ENCODE measurements at regions of chr2 and their contacts with region 1.

Region 1: DNA sequence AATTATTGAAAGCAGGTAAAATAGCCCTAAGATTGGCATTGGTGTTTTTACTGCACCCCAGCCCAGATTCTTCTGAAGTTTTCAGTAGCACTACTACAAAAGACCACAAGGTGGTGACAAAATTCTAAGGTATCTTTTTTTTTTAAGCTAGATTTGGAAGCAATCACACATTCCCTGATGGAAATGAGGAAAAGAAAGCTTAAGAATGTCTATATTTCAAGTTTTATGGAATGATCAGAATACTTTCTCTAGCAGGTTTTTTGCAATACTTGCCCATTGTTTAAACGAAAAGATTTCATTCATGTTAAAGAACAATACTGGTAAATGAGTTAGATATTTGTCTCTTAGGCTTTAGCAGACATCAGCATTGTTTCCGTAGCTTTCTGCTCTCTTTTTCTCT is 32.1 kb upstream of the ZNF638 start:
- DNase-seq: no peak
- H3K4me3 Mint-ChIP-seq: no peak overlapping the region
- H3K27ac Mint-ChIP-seq: no peak overlapping the region
- H3K4me1 Mint-ChIP-seq: no peaks in the 10 kb centered on the region
- H3K27me3 Mint-ChIP-seq: peaks cover 6% of the 10 kb centered on the region

Region 2: GRCh38 chr2:71018625-71019024 is 280.9 kb before region 1 on chr2:
- CTCF ChIA-PET with region 1: no interaction called
- POLR2A ChIA-PET with region 1: no interaction called
- intact Hi-C with region 1: loop called (anchors 10 kb)
- DNase-seq: no peak
- H3K4me3 Mint-ChIP-seq: no peak overlapping the region
- H3K27ac Mint-ChIP-seq: no peak overlapping the region
- H3K4me1 Mint-ChIP-seq: peaks cover 7% of the 10 kb centered on the region
- H3K27me3 Mint-ChIP-seq: no peaks in the 10 kb centered on the region

Region 3: GRCh38 chr2:71157124-71157793 is 142.2 kb before region 1 on chr2:
- CTCF ChIA-PET with region 1: interaction called, 3 read pairs
- POLR2A ChIA-PET with region 1: no interaction called
- intact Hi-C with region 1: loop called (anchors 10 kb)
- DNase-seq: peak; percentile 66
- H3K4me3 Mint-ChIP-seq: no peak overlapping the region
- H3K27ac Mint-ChIP-seq: no peak overlapping the region
- H3K4me1 Mint-ChIP-seq: no peaks in the 10 kb centered on the region
- H3K27me3 Mint-ChIP-seq: peaks cover 5% of the 10 kb centered on the region

Region 4: DNA sequence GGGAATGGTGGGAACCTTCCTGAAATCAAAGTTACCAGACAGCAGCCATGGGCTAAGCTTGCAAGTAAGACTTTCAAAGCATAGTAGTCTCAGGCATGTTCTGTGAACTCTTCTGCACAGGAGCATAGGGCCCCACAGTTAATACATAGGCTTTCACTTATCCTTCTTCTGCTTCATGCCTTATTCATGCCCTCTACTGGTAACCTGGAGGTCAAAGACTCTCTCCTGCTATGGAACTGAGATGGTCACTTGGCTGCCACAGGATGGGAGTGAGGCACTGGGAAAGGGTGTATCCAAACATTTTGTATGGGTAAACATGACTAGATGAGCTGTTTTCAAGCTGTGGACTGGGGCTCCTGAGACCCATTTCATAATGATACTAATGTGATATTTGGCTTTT is 17.0 kb before region 1 on chr2:
- CTCF ChIA-PET with region 1: interaction called, 18 read pairs
- POLR2A ChIA-PET with region 1: no interaction called
- intact Hi-C with region 1: no loop called
- DNase-seq: no peak
- H3K4me3 Mint-ChIP-seq: no peak overlapping the region
- H3K27ac Mint-ChIP-seq: no peak overlapping the region
- H3K4me1 Mint-ChIP-seq: peaks cover 5% of the 10 kb centered on the region
- H3K27me3 Mint-ChIP-seq: peaks cover 54% of the 10 kb centered on the region

Region 5: GRCh38 chr2:71331581-71332434 is 32.3 kb after region 1 on chr2 and contains the start of gene ZNF638:
- CTCF ChIA-PET with region 1: interaction called, 30 read pairs
- POLR2A ChIA-PET with region 1: no interaction called
- intact Hi-C with region 1: no loop called
- DNase-seq: peak; percentile 94
- H3K4me3 Mint-ChIP-seq: peak within 1 kb of the TSS; percentile 94
- H3K27ac Mint-ChIP-seq: peak within 1 kb of the TSS; percentile 93
- H3K4me1 Mint-ChIP-seq: peaks cover 31% of the 10 kb centered on the region
- H3K27me3 Mint-ChIP-seq: peaks cover 2% of the 10 kb centered on the region
- total RNA-seq, gene ZNF638: 74.2 to 87.4 TPM

Region 6: GRCh38 chr2:71449343-71449742 is 149.8 kb after region 1 on chr2:
- CTCF ChIA-PET with region 1: no interaction called
- POLR2A ChIA-PET with region 1: no interaction called
- intact Hi-C with region 1: no loop called
- DNase-seq: no peak
- H3K4me3 Mint-ChIP-seq: no peak overlapping the region
- H3K27ac Mint-ChIP-seq: no peak overlapping the region
- H3K4me1 Mint-ChIP-seq: peaks cover 10% of the 10 kb centered on the region
- H3K27me3 Mint-ChIP-seq: peaks cover 12% of the 10 kb centered on the region

Region 7: DNA sequence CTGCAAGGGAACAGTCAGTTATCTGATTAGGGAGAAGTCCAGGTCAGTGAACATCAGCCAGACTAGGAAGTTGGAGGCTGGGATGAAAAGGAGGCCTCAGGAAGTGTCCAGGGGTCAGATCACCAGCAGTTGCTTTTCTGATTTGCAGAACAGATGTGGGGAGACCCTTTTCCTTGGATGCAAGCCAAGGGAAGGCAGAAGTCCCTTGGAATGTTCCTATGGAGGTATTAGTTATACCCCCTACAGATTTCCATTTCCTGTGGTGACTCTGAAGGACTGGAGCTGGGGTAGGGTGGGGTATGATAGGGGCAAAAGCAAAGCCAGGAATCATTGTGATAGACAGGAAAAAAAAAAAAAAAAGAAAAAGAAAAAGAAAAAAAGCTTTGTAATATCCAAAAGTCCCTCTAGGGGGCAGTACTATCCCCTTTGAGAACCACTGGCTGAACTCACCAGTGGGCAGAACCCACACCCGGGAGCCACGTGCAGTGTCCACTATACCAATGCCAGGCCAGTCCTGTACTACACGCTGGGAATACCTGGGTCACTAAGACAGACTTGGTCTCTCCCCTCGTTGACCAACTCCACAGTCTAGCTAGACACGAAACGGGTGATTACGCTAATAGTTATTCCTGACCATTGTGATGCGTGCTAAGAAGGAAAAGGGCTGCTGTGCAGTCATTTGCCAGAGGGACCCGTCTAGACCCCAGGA is 161.2 kb after region 1 on chr2:
- CTCF ChIA-PET with region 1: interaction called, 10 read pairs
- POLR2A ChIA-PET with region 1: no interaction called
- intact Hi-C with region 1: no loop called
- DNase-seq: no peak
- H3K4me3 Mint-ChIP-seq: no peak overlapping the region
- H3K27ac Mint-ChIP-seq: no peak overlapping the region
- H3K4me1 Mint-ChIP-seq: no peaks in the 10 kb centered on the region
- H3K27me3 Mint-ChIP-seq: peaks cover 5% of the 10 kb centered on the region

Region 8: DNA sequence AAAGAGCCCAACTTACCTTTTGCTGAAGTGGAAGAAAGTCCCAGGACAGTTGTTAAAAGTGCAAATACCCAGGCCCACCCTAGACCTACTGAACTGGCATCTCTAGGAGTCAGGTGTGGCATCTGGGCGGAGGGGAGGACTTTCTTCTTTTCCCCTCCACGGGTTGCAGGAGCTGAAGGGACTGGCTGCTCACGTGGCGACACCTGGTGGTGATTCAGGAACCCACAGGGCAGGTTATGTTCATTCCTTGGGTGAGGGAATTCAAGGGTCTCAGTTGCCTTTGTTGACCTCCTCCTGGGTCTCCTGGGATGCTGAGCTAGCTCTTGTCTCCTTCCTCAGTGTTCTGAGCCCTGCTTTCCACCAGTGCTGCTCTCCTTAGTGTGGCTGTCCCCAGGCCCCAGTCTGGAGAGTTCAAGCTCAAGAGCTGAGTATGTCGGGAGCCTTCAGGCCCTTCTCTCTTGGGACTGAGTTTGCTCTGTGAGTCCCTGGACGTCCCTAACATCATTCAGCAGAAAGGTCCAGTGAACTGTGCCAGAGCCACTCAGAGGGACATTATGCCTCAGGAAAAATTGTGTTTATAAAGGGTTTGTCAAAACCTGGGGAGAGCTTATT is 210.8 kb after region 1 on chr2:
- CTCF ChIA-PET with region 1: interaction called, 195 read pairs
- POLR2A ChIA-PET with region 1: no interaction called
- intact Hi-C with region 1: loop called (anchors 1 kb)
- DNase-seq: peak; percentile 77
- H3K4me3 Mint-ChIP-seq: no peak overlapping the region
- H3K27ac Mint-ChIP-seq: no peak overlapping the region
- H3K4me1 Mint-ChIP-seq: no peaks in the 10 kb centered on the region
- H3K27me3 Mint-ChIP-seq: peaks cover 5% of the 10 kb centered on the region